ENCODE measurements at regions of chr4 and their contacts with region 1.

Region 1: GRCh38 chr4:1266881-1267763 is 18.2 kb upstream of the CTBP1 start:
- DNase-seq: peak in 5 of 35 experiments; percentile 21 to 51 (median 25)
- ATAC-seq: peak; percentile 49 to 85 (median 53)
- H3K4me3 ChIP-seq: peak overlapping the region in 1 of 2 donors; percentile 46
- H3K4me3 Mint-ChIP-seq: peak overlapping the region; percentile 74 to 84 (median 78)
- H3K27ac ChIP-seq: peak overlapping the region; percentile 81
- H3K27ac Mint-ChIP-seq: peak overlapping the region; percentile 90
- H3K4me1 ChIP-seq: peaks cover 5 to 6% of the 10 kb centered on the region in 2 experiments
- H3K4me1 Mint-ChIP-seq: peaks cover 13 to 21% (median 17%) of the 10 kb centered on the region in 3 donors
- H3K27me3 ChIP-seq: no peaks in the 10 kb centered on the region
- H3K27me3 Mint-ChIP-seq: no peaks in the 10 kb centered on the region

Region 2: GRCh38 chr4:1130316-1131186 is 136.6 kb before region 1 on chr4:
- CTCF ChIA-PET with region 1: interaction called, 4 to 19 read pairs
- POLR2A ChIA-PET with region 1: no interaction called
- DNase-seq: peak; percentile 57 to 90 (median 70)
- ATAC-seq: peak; percentile 97 to 100 (median 99)
- H3K4me3 ChIP-seq: no peak overlapping the region
- H3K4me3 Mint-ChIP-seq: no peak overlapping the region
- H3K27ac ChIP-seq: no peak overlapping the region
- H3K27ac Mint-ChIP-seq: no peak overlapping the region
- H3K4me1 ChIP-seq: peaks cover 0 to 4% of the 10 kb centered on the region in 2 experiments
- H3K4me1 Mint-ChIP-seq: peaks cover 0 to 3% (median 3%) of the 10 kb centered on the region in 3 donors
- H3K27me3 ChIP-seq: no peaks in the 10 kb centered on the region
- H3K27me3 Mint-ChIP-seq: peaks cover 0 to 6% of the 10 kb centered on the region in 2 donors

Region 3: GRCh38 chr4:1167247-1167949 is 99.7 kb before region 1 on chr4:
- CTCF ChIA-PET with region 1: interaction called in 1 of 2 experiments, 17 read pairs
- POLR2A ChIA-PET with region 1: no interaction called
- DNase-seq: peak; percentile 66 to 95 (median 87)
- ATAC-seq: peak; percentile 85 to 89 (median 88)
- H3K4me3 ChIP-seq: peak overlapping the region; percentile 88 to 91
- H3K4me3 Mint-ChIP-seq: peak overlapping the region; percentile 79 to 84 (median 83)
- H3K27ac ChIP-seq: peak overlapping the region; percentile 66
- H3K27ac Mint-ChIP-seq: peak overlapping the region; percentile 40 to 58
- H3K4me1 ChIP-seq: peaks cover 3 to 60% of the 10 kb centered on the region in 2 experiments
- H3K4me1 Mint-ChIP-seq: peaks cover 27 to 33% (median 27%) of the 10 kb centered on the region in 3 donors
- H3K27me3 ChIP-seq: peaks cover 0 to 54% of the 10 kb centered on the region in 2 experiments
- H3K27me3 Mint-ChIP-seq: peaks cover 6 to 12% of the 10 kb centered on the region in 2 donors

Region 4: GRCh38 chr4:1249148-1249730 is 17.9 kb before region 1 on chr4:
- CTCF ChIA-PET with region 1: interaction called, 4 to 13 read pairs
- POLR2A ChIA-PET with region 1: interaction called in 1 of 2 experiments, 3 read pairs
- DNase-seq: peak; percentile 75 to 94 (median 83)
- ATAC-seq: peak; percentile 73 to 77 (median 74)
- H3K4me3 ChIP-seq: peak overlapping the region; percentile 61 to 84
- H3K4me3 Mint-ChIP-seq: peak overlapping the region; percentile 84 to 92 (median 90)
- H3K27ac ChIP-seq: peak overlapping the region; percentile 96
- H3K27ac Mint-ChIP-seq: peak overlapping the region; percentile 91 to 95
- H3K4me1 ChIP-seq: peaks cover 22 to 81% of the 10 kb centered on the region in 2 experiments
- H3K4me1 Mint-ChIP-seq: peaks cover 70 to 74% (median 72%) of the 10 kb centered on the region in 3 donors
- H3K27me3 ChIP-seq: no peaks in the 10 kb centered on the region
- H3K27me3 Mint-ChIP-seq: no peaks in the 10 kb centered on the region

Region 5: DNA sequence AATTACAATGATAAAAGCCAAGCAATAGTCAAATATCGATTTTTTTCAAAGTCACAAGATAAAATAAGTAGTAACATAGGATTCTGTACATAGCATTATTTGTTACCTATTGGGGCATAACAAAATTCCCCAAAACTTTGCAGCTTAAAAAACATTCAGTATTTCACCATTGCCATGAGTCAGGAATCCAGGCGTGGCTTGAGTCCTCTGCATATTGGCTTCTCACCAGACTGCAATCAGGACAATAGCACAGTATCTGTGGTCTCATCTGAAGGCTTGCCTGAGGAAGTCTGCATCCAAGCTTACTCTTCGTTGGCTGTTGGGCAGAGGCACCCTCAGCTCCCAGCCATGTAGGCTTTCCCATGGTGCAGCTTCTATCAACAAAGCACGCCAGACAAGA is 12.0 kb before region 1 on chr4:
- CTCF ChIA-PET with region 1: interaction called, 4 to 13 read pairs
- POLR2A ChIA-PET with region 1: interaction called, 3 to 10 read pairs
- DNase-seq: no peak
- ATAC-seq: no peak
- H3K4me3 ChIP-seq: no peak overlapping the region
- H3K4me3 Mint-ChIP-seq: no peak overlapping the region
- H3K27ac ChIP-seq: peak overlapping the region; percentile 73
- H3K27ac Mint-ChIP-seq: peak overlapping the region; percentile 84 to 95
- H3K4me1 ChIP-seq: peaks cover 6 to 42% of the 10 kb centered on the region in 2 experiments
- H3K4me1 Mint-ChIP-seq: peaks cover 64 to 75% (median 71%) of the 10 kb centered on the region in 3 donors
- H3K27me3 ChIP-seq: no peaks in the 10 kb centered on the region
- H3K27me3 Mint-ChIP-seq: no peaks in the 10 kb centered on the region

Region 6: DNA sequence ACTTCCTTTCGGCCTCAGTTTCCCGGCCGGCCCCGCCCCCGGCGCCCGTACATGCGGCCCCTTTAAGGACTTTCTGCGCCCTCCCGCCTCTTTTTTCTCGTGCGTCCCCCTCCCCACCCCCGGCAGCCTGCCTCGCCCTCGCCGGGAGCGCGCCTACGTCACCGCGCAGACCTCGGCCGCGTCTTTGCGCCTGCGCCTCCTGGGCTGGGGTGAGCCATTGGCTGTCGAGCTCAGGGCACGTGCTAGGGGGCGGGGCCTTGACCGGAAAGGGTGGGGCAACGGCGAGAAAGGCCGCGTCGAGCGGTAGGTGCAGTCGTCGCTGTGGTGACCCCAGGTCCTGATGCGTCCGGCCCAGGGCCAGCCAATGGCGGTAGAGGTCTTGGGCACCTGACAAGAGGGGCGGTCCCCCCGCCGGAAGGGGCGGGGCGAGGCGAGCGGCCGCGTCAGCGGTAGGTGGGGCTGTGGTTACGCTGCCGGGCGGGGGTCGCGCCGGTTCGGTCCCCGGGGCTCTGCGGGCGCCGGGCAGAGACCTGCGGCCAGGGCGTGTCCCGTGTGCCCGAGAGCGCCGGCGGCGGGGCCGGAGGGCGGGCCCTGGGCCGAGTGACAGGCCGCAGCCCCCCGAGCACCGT is 79.8 kb after region 1 on chr4 and contains the start of gene UVSSA:
- CTCF ChIA-PET with region 1: interaction called in 1 of 2 experiments, 14 read pairs
- POLR2A ChIA-PET with region 1: no interaction called
- DNase-seq: peak; percentile 99 to 100 (median 100)
- ATAC-seq: peak; percentile 91 to 93 (median 92)
- H3K4me3 ChIP-seq: peak within 1 kb of the TSS; percentile 74 to 75
- H3K4me3 Mint-ChIP-seq: peak within 1 kb of the TSS; percentile 86 to 92 (median 88)
- H3K27ac ChIP-seq: peak within 1 kb of the TSS; percentile 91
- H3K27ac Mint-ChIP-seq: peak within 1 kb of the TSS; percentile 92 to 94
- H3K4me1 ChIP-seq: peaks cover 0 to 47% of the 10 kb centered on the region in 2 experiments
- H3K4me1 Mint-ChIP-seq: peaks cover 38 to 47% (median 45%) of the 10 kb centered on the region in 3 donors
- H3K27me3 ChIP-seq: no peaks in the 10 kb centered on the region
- H3K27me3 Mint-ChIP-seq: no peaks in the 10 kb centered on the region
- total RNA-seq, gene UVSSA: 39.9 to 53.7 (median 42.7) TPM

Region 7: GRCh38 chr4:1410491-1411325 is 143.6 kb after region 1 on chr4:
- CTCF ChIA-PET with region 1: no interaction called
- POLR2A ChIA-PET with region 1: no interaction called
- DNase-seq: peak in 27 of 35 experiments; percentile 5 to 62 (median 30)
- ATAC-seq: peak in 3 of 4 experiments; percentile 43 to 63 (median 43)
- H3K4me3 ChIP-seq: no peak overlapping the region
- H3K4me3 Mint-ChIP-seq: no peak overlapping the region
- H3K27ac ChIP-seq: no peak overlapping the region
- H3K27ac Mint-ChIP-seq: no peak overlapping the region
- H3K4me1 ChIP-seq: peaks cover 0 to under 1% of the 10 kb centered on the region in 2 experiments
- H3K4me1 Mint-ChIP-seq: peaks cover 0 to 12% (median 11%) of the 10 kb centered on the region in 3 donors
- H3K27me3 ChIP-seq: peaks cover 17 to 81% of the 10 kb centered on the region in 2 experiments
- H3K27me3 Mint-ChIP-seq: peaks cover 55 to 70% of the 10 kb centered on the region in 2 donors

Measured in T-cell (primary cell).